H1 (cell line): ENCODE measurements at regions of chr6 and their contacts with region 1.

Region 1: GRCh38 chr6:50655848-50656453 is 57.4 kb upstream of the TFAP2D start:
- DNase-seq: no peak
- H3K4me3 ChIP-seq: no peak overlapping the region
- H3K27ac ChIP-seq: no peak overlapping the region
- H3K4me1 ChIP-seq: no peaks in the 10 kb centered on the region
- H3K27me3 ChIP-seq: no peaks in the 10 kb centered on the region
- CTCF ChIP-seq: peak in 2 of 3 experiments; percentile 29 to 56; a peak in 2 of 4 replicates
- EP300 ChIP-seq: no peak
- POLR2A ChIP-seq: no peak
- RAD21 ChIP-seq: peak; percentile 43 to 54

Region 2: DNA sequence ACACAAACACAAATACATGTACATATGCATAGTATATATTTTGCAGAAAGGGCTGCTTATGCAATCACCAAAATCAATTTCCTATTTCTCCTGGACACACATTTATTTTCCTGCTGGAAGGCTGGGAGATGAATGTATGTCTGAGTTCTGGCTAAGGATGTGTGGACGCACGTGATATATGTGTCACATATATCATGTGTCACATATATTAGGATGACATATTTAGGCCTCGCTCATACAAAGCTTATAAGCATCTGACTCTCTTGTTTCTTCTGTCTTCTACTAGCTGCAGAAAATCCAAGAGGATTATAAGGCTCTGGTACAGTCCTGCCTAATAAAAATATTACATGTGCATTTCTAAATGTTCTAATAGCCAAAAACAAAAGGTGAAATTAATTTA is 10.1 kb after region 1 on chr6:
- CTCF ChIA-PET with region 1: interaction called, 13 read pairs
- POLR2A ChIA-PET with region 1: no interaction called
- DNase-seq: no peak
- H3K4me3 ChIP-seq: no peak overlapping the region
- H3K27ac ChIP-seq: no peak overlapping the region
- H3K4me1 ChIP-seq: peaks cover 0 to 3% (median 0%) of the 10 kb centered on the region in 4 experiments; a peak in 1 of 7 replicates
- H3K27me3 ChIP-seq: peaks cover 0 to 1% (median 0%) of the 10 kb centered on the region in 4 experiments; a peak in 1 of 7 replicates
- CTCF ChIP-seq: no peak
- EP300 ChIP-seq: no peak
- POLR2A ChIP-seq: no peak
- RAD21 ChIP-seq: no peak

Region 3: GRCh38 chr6:50681206-50681824 is 25.4 kb after region 1 on chr6:
- CTCF ChIA-PET with region 1: interaction called, 28 read pairs
- POLR2A ChIA-PET with region 1: no interaction called
- DNase-seq: no peak
- H3K4me3 ChIP-seq: no peak overlapping the region
- H3K27ac ChIP-seq: no peak overlapping the region
- H3K4me1 ChIP-seq: no peaks in the 10 kb centered on the region
- H3K27me3 ChIP-seq: no peaks in the 10 kb centered on the region
- CTCF ChIP-seq: no peak
- EP300 ChIP-seq: no peak
- POLR2A ChIP-seq: no peak
- RAD21 ChIP-seq: no peak

Region 4: GRCh38 chr6:50762798-50763197 is 106.8 kb after region 1 on chr6:
- CTCF ChIA-PET with region 1: interaction called, 10 read pairs
- POLR2A ChIA-PET with region 1: no interaction called
- DNase-seq: no peak
- H3K4me3 ChIP-seq: peak overlapping the region in 1 of 4 experiments; percentile 12; a peak in 1 of 8 replicates
- H3K27ac ChIP-seq: no peak overlapping the region
- H3K4me1 ChIP-seq: peaks cover 0 to 8% (median 2%) of the 10 kb centered on the region in 4 experiments; a peak in 4 of 7 replicates
- H3K27me3 ChIP-seq: no peaks in the 10 kb centered on the region
- CTCF ChIP-seq: no peak
- EP300 ChIP-seq: no peak
- POLR2A ChIP-seq: no peak
- RAD21 ChIP-seq: no peak